Right ventricle myocardium inferior (tissue), 1 donor: ENCODE measurements at regions of chr10 and their contacts with region 1.

Region 1: DNA sequence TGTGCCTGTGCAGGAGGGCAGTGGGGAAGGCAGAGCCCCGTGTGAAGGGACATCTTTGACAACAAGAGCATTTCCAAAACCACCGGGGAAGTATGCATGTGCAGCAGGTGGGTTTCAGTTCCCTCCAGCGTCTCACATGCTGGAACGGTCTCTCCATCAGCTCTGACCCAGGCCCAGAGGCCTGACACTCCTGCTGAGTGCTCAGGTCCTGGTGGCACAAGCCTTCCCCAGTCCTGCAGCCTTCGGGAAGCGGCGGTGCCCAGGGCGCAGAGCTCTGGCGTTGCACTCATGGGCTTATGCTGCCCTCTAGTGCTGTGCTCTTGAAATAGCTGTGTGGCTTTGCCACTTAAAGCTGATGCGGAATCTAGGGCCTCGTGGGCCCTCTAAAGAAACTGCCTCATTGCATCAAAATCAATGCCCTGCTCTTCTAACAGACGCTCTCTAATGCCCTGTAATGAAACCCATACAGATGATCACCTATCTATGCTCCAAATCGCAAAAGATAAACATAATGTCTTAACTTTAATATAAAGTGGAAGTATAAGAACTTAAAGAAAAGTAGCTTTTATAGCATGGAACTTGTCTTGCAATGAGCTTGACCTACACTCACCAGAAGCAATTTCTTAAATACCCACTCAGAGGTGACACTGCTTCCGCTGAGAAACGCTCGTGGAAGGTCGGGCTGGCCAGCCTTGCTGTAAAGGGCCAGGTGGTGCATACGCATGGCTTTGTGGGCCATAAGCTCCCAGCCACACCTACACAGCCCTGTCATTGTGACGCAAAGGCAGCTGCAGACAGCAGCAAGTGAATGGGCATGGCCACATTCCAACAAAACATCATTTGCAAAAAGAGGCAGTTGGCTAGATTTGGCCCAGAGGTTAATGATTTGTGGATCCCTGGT is 38.6 kb downstream of the CLRN3 start:
- DNase-seq: no peak
- ATAC-seq: peak; percentile 86

Region 2: GRCh38 chr10:127577376-127577775 is 276.7 kb before region 1 on chr10:
- intact Hi-C with region 1: loop called (anchors 10 kb)
- DNase-seq: no peak
- ATAC-seq: no peak

Region 3: DNA sequence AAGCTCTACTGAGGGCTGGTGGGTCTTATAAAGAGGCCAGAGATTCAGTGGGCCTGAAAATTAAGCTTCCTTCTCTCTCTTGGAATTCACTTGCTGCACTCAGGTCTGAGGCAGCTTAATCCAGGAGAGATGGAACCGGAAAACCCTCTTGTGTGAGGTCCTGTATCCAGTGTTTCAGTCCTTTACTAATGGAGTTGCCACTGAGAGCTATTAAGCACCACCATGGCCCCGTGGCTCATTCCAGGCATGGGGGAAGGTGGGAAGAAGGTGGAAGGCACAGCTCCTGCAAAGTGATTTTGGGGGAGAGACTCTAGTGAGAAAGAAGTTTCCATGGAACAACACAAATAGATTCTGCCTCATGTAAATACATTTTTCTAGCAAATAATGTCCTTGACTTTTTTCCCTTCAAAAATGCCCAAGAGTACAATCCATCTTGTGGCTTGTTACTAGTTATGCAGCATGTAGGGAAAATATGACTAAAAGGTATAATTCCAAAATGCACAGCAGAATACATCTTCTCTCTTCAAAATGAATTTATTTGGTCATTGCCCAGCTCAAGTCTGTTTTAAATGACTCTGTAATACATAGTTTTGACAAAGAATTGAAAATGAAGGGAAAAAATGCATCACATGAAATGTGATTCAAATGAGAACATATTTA is 163.8 kb before region 1 on chr10:
- intact Hi-C with region 1: no loop called
- DNase-seq: no peak
- ATAC-seq: no peak

Region 4: GRCh38 chr10:127715782-127716378 is 138.2 kb before region 1 on chr10:
- intact Hi-C with region 1: loop called (anchors 2 kb)
- DNase-seq: no peak
- ATAC-seq: no peak